WTC11 (cell line): ENCODE measurements at regions of chr15 and their contacts with region 1.

Region 1: DNA sequence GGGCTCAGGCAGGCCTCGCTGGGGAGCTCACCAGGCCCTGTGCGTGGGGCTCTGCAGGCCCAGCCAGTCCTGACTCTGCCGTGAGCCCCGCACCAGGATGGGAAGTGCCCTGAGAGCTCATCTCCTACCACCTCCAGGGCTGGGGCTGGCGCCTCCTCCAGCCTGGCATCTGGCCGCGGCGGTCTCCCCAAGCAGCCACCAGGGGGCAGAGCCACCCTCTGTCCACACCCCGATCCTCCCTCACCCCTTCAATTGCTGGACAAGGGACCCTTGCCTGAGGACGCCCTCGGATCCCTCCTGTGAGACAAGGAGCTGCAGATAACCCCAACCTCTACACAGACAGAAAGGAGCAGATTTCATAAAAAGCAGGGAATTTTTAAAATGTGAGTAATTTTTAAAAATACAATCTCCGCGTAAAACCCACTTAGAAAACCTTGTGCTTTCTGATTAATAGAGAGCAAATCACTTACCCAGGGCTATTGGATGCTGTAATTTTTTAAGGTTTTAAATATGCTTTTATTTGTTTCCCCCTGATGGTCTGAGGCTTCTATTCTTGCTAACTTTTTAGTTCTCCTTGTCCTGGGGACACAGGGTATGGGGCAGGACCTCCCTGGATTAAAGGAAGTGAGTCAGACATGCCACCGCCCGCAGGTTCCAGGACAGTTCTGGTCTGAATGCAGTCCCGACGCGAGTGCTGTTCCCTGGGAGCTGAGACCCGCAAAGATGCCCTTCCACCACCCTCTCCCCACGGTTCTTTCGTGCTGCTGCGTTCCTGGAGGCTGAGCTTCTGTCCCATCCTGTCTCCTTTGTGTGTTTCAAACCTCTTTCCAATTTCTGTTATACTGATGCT is 52.3 kb upstream of the CHRNA7 start:
- DNase-seq: peak; percentile 88
- ATAC-seq: peak; percentile 79
- H3K4me3 Mint-ChIP-seq: peak overlapping the region; percentile 23
- H3K27ac Mint-ChIP-seq: no peak overlapping the region
- H3K4me1 Mint-ChIP-seq: peaks cover 27% of the 10 kb centered on the region
- H3K27me3 Mint-ChIP-seq: peaks cover 15% of the 10 kb centered on the region
- CTCF ChIP-seq: peak; percentile 89

Region 2: DNA sequence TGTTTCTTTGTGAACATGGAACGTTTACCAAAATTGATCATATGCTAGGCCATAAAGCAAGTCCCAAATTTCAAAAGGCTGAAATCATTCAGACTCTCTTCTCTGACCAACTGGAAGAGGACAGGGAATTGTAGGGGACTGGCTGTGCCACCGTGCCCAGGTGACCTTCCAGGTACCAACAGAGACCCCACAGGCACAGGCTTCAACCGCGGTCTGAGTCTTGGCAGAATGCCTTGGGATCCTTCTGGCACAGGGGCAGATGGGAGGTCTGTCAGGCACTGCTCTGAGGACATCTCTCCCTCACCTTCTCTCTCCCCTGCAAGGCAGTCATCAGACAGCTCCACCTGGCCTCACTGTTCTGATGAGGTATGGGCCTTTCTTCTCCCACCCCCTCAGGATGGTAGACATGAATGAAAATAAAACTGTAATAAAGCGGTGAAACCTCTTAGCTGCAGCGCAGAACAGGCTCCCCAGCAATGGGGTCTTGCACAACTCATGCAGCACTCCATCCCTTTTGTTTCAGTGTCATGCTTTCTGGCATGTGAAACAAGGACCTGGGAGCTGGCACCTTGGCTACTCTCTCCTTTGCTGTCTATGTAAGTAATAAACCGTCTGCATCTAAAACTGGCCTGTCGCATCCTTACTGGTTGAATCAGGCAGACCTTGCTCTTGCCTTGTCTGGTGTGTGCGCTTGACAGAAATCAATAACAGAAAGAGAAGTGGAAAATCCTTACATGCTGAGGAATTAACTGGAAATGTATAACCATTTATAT is 362.2 kb before region 1 on chr15:
- CTCF ChIA-PET with region 1: no interaction called
- POLR2A ChIA-PET with region 1: no interaction called
- DNase-seq: no peak
- ATAC-seq: no peak
- H3K4me3 Mint-ChIP-seq: no peak overlapping the region
- H3K27ac Mint-ChIP-seq: no peak overlapping the region
- H3K4me1 Mint-ChIP-seq: no peaks in the 10 kb centered on the region
- H3K27me3 Mint-ChIP-seq: no peaks in the 10 kb centered on the region
- CTCF ChIP-seq: no peak

Region 3: GRCh38 chr15:31887246-31887645 is 90.8 kb before region 1 on chr15:
- CTCF ChIA-PET with region 1: interaction called, 55 read pairs
- POLR2A ChIA-PET with region 1: no interaction called
- DNase-seq: peak; percentile 64
- ATAC-seq: peak; percentile 95
- H3K4me3 Mint-ChIP-seq: no peak overlapping the region; the same call in 1 of the 2 replicates
- H3K27ac Mint-ChIP-seq: no peak overlapping the region
- H3K4me1 Mint-ChIP-seq: no peaks in the 10 kb centered on the region
- H3K27me3 Mint-ChIP-seq: peaks cover 2% of the 10 kb centered on the region; the same call in 1 of the 2 replicates
- CTCF ChIP-seq: no peak

Region 4: DNA sequence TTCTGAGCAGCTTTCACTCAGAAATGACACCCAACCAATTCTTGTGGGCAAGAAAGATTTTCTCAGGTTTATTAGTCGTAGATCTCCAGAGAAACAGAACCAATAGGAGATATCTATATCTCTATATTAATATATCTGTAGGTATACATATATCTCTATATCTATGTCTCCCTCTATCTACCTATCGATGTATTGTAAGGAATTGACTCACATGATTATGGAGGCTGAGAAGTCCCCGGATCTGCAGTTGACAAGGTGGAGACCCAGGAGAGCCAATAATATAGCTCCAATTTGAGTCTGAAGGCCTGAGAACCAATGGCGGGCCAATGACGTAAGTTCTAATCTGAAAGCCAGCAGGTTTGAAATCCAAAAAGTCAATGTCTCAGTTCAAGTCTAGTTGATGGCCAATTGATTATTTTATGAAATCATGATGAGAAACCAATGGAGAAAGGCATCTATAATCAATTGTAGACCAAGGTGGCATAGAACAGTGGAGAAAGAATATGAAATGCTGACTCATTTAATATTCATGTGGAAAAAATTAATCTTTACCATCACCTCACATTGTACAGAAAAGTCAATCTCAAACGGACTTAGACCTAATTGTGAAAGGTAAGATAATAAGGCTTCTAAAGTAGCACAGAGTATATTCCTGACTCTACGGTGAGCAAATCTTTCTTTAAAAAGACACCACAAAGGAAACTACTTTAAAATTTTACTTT is 13.3 kb before region 1 on chr15:
- CTCF ChIA-PET with region 1: interaction called, 21 read pairs
- POLR2A ChIA-PET with region 1: no interaction called
- DNase-seq: no peak
- ATAC-seq: no peak
- H3K4me3 Mint-ChIP-seq: no peak overlapping the region
- H3K27ac Mint-ChIP-seq: no peak overlapping the region
- H3K4me1 Mint-ChIP-seq: peaks cover 11% of the 10 kb centered on the region
- H3K27me3 Mint-ChIP-seq: no peaks in the 10 kb centered on the region
- CTCF ChIP-seq: no peak

Region 5: DNA sequence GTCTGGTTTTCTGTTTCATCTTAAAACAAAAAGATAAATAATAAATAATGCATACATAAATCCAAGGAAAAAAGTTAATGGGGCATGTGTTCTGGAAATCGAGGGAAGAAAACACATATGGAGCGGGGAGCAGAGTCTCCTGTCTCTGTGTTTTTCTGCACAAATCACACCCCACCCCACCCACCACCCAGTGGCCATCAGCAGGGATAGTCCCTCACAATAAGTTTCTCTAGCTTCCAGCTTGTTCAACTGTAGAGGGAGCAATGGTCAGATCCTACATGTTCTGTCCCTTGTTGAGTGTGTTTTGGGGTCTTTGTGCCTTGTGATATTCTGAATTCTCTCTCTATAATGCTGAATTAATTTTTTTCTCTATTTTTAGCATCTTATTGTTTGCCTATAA is 25.5 kb after region 1 on chr15:
- CTCF ChIA-PET with region 1: interaction called, 20 read pairs
- POLR2A ChIA-PET with region 1: no interaction called
- DNase-seq: no peak
- ATAC-seq: peak; percentile 59
- H3K4me3 Mint-ChIP-seq: no peak overlapping the region
- H3K27ac Mint-ChIP-seq: no peak overlapping the region
- H3K4me1 Mint-ChIP-seq: no peaks in the 10 kb centered on the region
- H3K27me3 Mint-ChIP-seq: no peaks in the 10 kb centered on the region; the same call in 1 of the 2 replicates
- CTCF ChIP-seq: no peak

Region 6: DNA sequence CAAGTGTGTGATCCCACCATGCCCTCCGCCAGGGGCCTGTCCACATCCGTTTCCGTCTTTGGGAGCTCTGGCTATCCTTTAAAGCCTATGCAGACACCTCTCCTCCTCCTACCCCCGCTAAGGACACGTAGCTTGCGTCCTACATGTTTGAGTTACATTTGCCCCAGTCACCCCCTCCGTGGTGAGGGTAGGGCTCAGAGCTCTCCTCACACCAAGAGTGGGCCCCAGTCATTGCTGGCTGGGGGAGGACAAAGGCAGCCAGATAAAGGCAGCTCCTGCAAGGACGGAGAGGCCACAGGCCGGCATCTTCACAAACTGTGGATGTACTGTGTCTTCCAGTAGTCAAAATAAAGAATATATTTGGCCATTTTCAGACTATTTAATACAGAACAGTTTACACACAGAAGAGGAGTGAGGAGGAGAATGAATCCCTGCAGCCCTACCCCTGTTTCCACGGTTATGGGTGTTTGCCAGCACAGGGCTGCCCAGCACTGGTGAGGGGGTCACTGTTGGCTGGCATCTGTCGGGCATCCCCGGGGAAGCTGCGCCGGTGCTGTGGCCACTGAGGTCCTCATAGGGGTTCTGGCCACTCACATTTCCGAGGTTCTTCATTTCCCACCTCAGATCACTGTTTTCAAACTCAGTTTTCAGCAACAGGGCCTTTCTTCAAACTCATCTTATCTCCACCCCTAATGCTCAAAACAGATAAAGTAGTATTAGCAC is 171.0 kb after region 1 on chr15:
- CTCF ChIA-PET with region 1: interaction called, 20 read pairs
- POLR2A ChIA-PET with region 1: no interaction called
- DNase-seq: no peak
- ATAC-seq: no peak
- H3K4me3 Mint-ChIP-seq: no peak overlapping the region
- H3K27ac Mint-ChIP-seq: no peak overlapping the region
- H3K4me1 Mint-ChIP-seq: peaks cover 28% of the 10 kb centered on the region
- H3K27me3 Mint-ChIP-seq: no peaks in the 10 kb centered on the region
- CTCF ChIP-seq: no peak